Breast epithelium (tissue), 4 donors: ENCODE measurements at regions of chr21 and their contacts with region 1.

Region 1: DNA sequence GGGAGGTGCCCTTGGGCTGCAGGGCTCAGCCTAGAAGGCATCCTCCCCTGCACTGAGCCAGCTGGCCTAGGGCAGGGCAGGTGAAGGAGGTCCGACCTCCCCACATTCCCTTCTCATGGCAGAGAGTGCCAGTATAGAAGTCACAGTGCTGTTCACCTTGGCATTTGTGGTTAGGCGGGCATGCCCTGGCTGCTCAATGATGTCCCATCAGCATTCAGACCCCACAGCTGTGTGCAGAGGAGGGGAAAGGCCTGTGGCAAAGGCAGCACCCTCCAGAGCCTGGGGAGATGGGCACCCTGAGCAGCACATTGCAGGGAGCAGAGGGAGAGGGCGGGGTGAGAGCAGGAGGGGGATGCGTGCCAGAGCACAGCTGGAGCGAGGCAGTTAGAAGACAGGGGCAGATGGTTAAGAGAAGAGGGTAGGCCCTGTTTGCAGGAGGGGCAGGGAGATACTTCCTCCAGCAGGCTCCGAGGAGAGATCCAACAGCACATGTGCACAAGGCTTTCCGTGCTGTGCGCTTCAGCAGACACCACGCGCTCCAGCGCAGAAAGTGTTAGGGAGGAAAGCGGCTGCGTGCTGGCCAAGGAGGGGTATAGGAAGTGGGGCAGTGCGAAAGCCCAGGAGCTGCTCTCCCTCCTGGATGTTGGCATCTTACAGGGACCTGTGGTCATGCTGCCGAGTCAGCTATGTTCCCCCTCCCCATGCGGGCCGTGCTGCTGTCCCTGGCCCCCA is 43.7 kb upstream of the COL6A1 start:
- DNase-seq: no peak
- H3K4me3 ChIP-seq: no peak overlapping the region
- H3K27ac ChIP-seq: no peak overlapping the region
- H3K4me1 ChIP-seq: no peaks in the 10 kb centered on the region
- H3K27me3 ChIP-seq: no peaks in the 10 kb centered on the region
- CTCF ChIP-seq: no peak
- POLR2A ChIP-seq: no peak

Region 2: GRCh38 chr21:44653656-44654575 is 1284.0 kb before region 1 on chr21:
- intact Hi-C with region 1: no loop called
- DNase-seq: no peak
- H3K4me3 ChIP-seq: no peak overlapping the region
- H3K27ac ChIP-seq: no peak overlapping the region
- H3K4me1 ChIP-seq: no peaks in the 10 kb centered on the region
- H3K27me3 ChIP-seq: peaks cover 0 to 17% of the 10 kb centered on the region in 2 donors
- CTCF ChIP-seq: no peak
- POLR2A ChIP-seq: no peak

Region 3: DNA sequence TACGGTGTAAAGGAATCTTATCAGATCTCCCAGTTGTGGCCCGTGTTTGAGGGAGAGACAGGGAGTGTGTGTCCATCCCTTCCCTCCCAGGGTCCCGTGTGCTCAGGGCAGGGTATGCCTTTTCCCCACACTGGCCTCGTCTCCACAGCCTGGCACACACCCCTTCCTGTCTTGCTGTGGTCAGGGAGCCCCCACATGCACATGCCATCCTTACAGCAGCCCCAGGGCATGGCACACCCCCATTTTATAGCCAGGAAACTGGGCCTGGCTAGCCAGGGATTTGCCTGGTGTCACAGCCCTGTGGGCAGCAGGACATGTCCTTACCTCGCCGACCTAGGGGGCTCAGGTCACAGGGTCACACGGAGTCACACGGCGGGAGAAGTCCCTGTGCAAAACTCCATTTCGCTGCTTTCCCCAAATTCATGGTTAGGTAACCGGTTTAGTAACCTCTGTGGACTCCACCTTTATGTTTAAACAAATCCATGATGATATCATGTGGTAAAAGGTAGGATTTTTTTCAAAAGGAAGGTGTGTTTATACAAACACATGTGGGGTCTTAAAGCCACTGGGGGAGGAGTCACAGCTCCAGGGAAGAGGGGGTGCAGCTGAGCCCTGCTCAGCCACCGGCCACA is 22.8 kb before region 1 on chr21:
- intact Hi-C with region 1: loop called (anchors 1 kb)
- DNase-seq: no peak
- H3K4me3 ChIP-seq: no peak overlapping the region
- H3K27ac ChIP-seq: peak overlapping the region in 1 of 2 donors; percentile 14
- H3K4me1 ChIP-seq: peaks cover 0 to 3% of the 10 kb centered on the region in 2 donors
- H3K27me3 ChIP-seq: no peaks in the 10 kb centered on the region
- CTCF ChIP-seq: no peak
- POLR2A ChIP-seq: no peak